Activated B cell treated with CpG ODN at 0.5 μM for 24 hours (primary cell): ENCODE measurements at regions of chr17 and their contacts with region 1.

Region 1: DNA sequence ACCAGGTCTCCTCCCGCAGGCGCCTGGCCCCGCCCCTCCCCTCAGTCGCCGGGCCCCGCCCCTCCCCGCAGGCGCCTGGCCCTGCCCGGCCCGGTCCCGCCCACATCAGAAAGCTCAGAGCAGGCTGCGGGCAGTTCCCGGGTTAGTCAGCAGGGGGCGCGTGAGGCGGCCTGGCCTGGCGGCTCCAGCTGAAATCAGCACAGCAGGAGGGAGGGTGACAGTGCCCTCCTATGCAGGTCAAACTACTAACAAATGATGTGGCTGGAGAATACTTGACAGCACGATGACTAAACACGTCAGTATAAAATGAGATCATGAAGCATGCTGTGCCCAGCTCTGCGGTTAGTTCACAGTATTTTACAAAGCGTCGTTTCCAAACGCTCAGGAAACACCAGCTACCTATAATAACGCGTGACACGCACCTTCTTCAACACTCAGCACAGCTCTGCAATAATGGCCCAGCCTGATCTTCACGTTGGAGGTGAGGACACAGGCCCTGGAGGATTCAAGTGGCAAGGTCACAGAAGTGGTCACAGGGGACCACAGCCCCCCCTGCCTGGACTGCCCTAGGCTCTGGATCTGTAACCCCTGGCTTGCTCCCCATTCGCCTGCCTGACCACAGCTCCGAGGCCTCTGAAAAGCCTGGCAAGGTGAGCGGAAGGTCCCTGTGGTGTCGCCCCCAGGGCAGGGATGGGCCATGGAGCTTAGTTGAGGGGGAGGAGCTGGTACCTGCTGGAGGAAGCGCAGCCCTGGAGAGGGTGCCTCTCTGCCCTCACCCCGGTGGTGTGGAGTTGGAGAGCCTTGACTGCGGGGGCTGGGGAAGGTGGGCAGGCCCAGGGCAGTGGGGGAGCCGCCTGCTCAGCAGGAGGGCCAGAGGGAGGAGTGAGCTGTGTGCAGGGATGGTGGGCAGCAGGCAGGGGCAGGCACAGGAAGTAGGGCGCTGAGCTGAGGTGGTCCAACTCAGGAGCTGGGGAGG is 81.2 kb downstream of the KCNJ12 start:
- DNase-seq: peak; percentile 78
- ATAC-seq: peak; percentile 93
- H3K4me3 Mint-ChIP-seq: no peak overlapping the region
- H3K27ac Mint-ChIP-seq: no peak overlapping the region
- H3K4me1 Mint-ChIP-seq: peaks cover 7% of the 10 kb centered on the region
- H3K27me3 Mint-ChIP-seq: peaks cover 27% of the 10 kb centered on the region
- CTCF ChIP-seq: peak; percentile 69

Region 2: GRCh38 chr17:21119247-21119918 is 338.0 kb before region 1 on chr17:
- CTCF ChIA-PET with region 1: interaction called, 4 read pairs
- POLR2A ChIA-PET with region 1: no interaction called
- intact Hi-C with region 1: loop called (anchors 2 kb)
- DNase-seq: peak; percentile 41
- ATAC-seq: peak; percentile 93
- H3K4me3 Mint-ChIP-seq: no peak overlapping the region
- H3K27ac Mint-ChIP-seq: no peak overlapping the region
- H3K4me1 Mint-ChIP-seq: peaks cover 6% of the 10 kb centered on the region
- H3K27me3 Mint-ChIP-seq: peaks cover 9% of the 10 kb centered on the region
- CTCF ChIP-seq: no peak

Region 3: GRCh38 chr17:21157586-21158370 is 299.6 kb before region 1 on chr17:
- CTCF ChIA-PET with region 1: no interaction called
- POLR2A ChIA-PET with region 1: no interaction called
- intact Hi-C with region 1: no loop called
- DNase-seq: no peak
- ATAC-seq: no peak
- H3K4me3 Mint-ChIP-seq: no peak overlapping the region
- H3K27ac Mint-ChIP-seq: no peak overlapping the region
- H3K4me1 Mint-ChIP-seq: peaks cover 3% of the 10 kb centered on the region
- H3K27me3 Mint-ChIP-seq: no peaks in the 10 kb centered on the region
- CTCF ChIP-seq: no peak

Region 4: GRCh38 chr17:21275579-21276263 is 181.6 kb before region 1 on chr17:
- CTCF ChIA-PET with region 1: no interaction called
- POLR2A ChIA-PET with region 1: no interaction called
- intact Hi-C with region 1: loop called (anchors 2 kb)
- DNase-seq: peak; percentile 99
- ATAC-seq: peak; percentile 92
- H3K4me3 Mint-ChIP-seq: peak overlapping the region; percentile 88
- H3K27ac Mint-ChIP-seq: peak overlapping the region; percentile 88
- H3K4me1 Mint-ChIP-seq: peaks cover 34% of the 10 kb centered on the region
- H3K27me3 Mint-ChIP-seq: no peaks in the 10 kb centered on the region
- CTCF ChIP-seq: no peak

Region 5: GRCh38 chr17:21318439-21318838 is 138.9 kb before region 1 on chr17:
- CTCF ChIA-PET with region 1: no interaction called
- POLR2A ChIA-PET with region 1: no interaction called
- intact Hi-C with region 1: loop called (anchors 10 kb)
- DNase-seq: no peak
- ATAC-seq: no peak
- H3K4me3 Mint-ChIP-seq: no peak overlapping the region
- H3K27ac Mint-ChIP-seq: no peak overlapping the region
- H3K4me1 Mint-ChIP-seq: peaks cover 7% of the 10 kb centered on the region
- H3K27me3 Mint-ChIP-seq: no peaks in the 10 kb centered on the region
- CTCF ChIP-seq: no peak

Region 6: GRCh38 chr17:21345236-21345635 is 112.1 kb before region 1 on chr17:
- CTCF ChIA-PET with region 1: no interaction called
- POLR2A ChIA-PET with region 1: no interaction called
- intact Hi-C with region 1: no loop called
- DNase-seq: no peak
- ATAC-seq: peak; percentile 22
- H3K4me3 Mint-ChIP-seq: peak overlapping the region; percentile 15
- H3K27ac Mint-ChIP-seq: no peak overlapping the region
- H3K4me1 Mint-ChIP-seq: peaks cover 11% of the 10 kb centered on the region
- H3K27me3 Mint-ChIP-seq: no peaks in the 10 kb centered on the region
- CTCF ChIP-seq: no peak

Region 7: DNA sequence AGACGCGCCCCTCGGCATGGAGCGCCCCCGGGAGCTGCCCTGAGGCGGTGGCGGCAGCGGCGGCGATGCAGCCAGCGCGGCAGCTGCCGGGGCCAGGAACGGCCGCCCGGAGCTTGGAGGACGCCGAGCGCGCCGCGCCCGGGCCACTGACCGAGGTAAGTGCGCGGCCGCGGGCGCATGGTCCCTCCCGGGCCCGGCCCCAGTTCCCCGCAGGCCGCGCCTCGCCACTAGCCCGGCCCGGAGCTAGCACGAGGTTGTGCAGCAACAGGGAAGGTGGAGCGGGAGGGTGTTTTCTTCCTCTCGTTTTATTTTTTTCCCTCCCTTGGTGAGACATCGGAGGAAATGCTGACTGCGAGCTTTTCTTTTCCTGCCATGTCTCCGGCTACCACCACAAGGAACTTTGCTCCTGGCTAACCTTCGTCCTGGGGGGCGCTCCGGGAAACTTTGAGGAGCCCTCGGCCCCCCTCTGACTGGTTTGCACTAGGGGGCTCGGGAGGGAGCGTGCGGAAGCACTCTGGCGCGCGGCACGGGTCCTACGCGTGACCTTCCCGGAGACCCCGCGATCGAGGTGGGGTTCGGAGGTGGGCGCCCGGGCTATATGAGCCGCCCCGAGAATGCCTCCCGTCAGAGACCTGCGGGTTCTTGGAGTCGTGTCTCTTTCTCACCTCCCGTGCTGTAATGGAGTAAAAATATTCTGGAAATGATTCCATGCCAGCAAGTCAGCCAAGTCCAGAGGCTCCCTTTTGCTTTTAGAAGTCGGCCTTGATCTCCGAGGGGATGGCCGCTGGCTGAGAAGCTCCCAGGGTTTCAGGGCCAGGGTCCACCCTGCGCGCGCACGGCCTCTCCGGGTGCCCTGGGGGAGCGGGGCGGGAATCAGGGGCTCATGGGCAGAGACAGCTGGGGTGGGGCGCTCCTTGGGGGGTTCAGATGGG is 80.3 kb before region 1 on chr17:
- CTCF ChIA-PET with region 1: no interaction called
- POLR2A ChIA-PET with region 1: no interaction called
- intact Hi-C with region 1: loop called (anchors 10 kb)
- DNase-seq: no peak
- ATAC-seq: no peak
- H3K4me3 Mint-ChIP-seq: peak overlapping the region; percentile 35
- H3K27ac Mint-ChIP-seq: no peak overlapping the region
- H3K4me1 Mint-ChIP-seq: peaks cover 28% of the 10 kb centered on the region
- H3K27me3 Mint-ChIP-seq: peaks cover 46% of the 10 kb centered on the region
- CTCF ChIP-seq: no peak

Region 8: GRCh38 chr17:21400816-21401593 is 56.3 kb before region 1 on chr17:
- CTCF ChIA-PET with region 1: no interaction called
- POLR2A ChIA-PET with region 1: no interaction called
- intact Hi-C with region 1: no loop called
- DNase-seq: no peak
- ATAC-seq: no peak
- H3K4me3 Mint-ChIP-seq: no peak overlapping the region
- H3K27ac Mint-ChIP-seq: no peak overlapping the region
- H3K4me1 Mint-ChIP-seq: no peaks in the 10 kb centered on the region
- H3K27me3 Mint-ChIP-seq: peaks cover 3% of the 10 kb centered on the region
- CTCF ChIP-seq: no peak

Region 9: GRCh38 chr17:21482189-21482865 is 25.0 kb after region 1 on chr17:
- CTCF ChIA-PET with region 1: no interaction called
- POLR2A ChIA-PET with region 1: no interaction called
- intact Hi-C with region 1: no loop called
- DNase-seq: no peak
- ATAC-seq: no peak
- H3K4me3 Mint-ChIP-seq: no peak overlapping the region
- H3K27ac Mint-ChIP-seq: no peak overlapping the region
- H3K4me1 Mint-ChIP-seq: no peaks in the 10 kb centered on the region
- H3K27me3 Mint-ChIP-seq: peaks cover 40% of the 10 kb centered on the region
- CTCF ChIP-seq: no peak

Region 10: GRCh38 chr17:21511363-21512198 is 54.2 kb after region 1 on chr17:
- CTCF ChIA-PET with region 1: interaction called, 24 read pairs
- POLR2A ChIA-PET with region 1: no interaction called
- intact Hi-C with region 1: loop called (anchors 1 kb)
- DNase-seq: peak; percentile 63
- ATAC-seq: peak; percentile 80
- H3K4me3 Mint-ChIP-seq: peak overlapping the region; percentile 80
- H3K27ac Mint-ChIP-seq: no peak overlapping the region
- H3K4me1 Mint-ChIP-seq: peaks cover 26% of the 10 kb centered on the region
- H3K27me3 Mint-ChIP-seq: peaks cover 17% of the 10 kb centered on the region
- CTCF ChIP-seq: no peak

Region 11: GRCh38 chr17:21551081-21551881 is 93.9 kb after region 1 on chr17:
- CTCF ChIA-PET with region 1: no interaction called
- POLR2A ChIA-PET with region 1: no interaction called
- intact Hi-C with region 1: loop called (anchors 10 kb)
- DNase-seq: peak; percentile 75
- ATAC-seq: peak; percentile 97
- H3K4me3 Mint-ChIP-seq: peak overlapping the region; percentile 84
- H3K27ac Mint-ChIP-seq: no peak overlapping the region
- H3K4me1 Mint-ChIP-seq: peaks cover 11% of the 10 kb centered on the region
- H3K27me3 Mint-ChIP-seq: peaks cover 33% of the 10 kb centered on the region
- CTCF ChIP-seq: no peak